BJ (cell line): ENCODE measurements at regions of chr2 and their contacts with region 1.

Region 1: DNA sequence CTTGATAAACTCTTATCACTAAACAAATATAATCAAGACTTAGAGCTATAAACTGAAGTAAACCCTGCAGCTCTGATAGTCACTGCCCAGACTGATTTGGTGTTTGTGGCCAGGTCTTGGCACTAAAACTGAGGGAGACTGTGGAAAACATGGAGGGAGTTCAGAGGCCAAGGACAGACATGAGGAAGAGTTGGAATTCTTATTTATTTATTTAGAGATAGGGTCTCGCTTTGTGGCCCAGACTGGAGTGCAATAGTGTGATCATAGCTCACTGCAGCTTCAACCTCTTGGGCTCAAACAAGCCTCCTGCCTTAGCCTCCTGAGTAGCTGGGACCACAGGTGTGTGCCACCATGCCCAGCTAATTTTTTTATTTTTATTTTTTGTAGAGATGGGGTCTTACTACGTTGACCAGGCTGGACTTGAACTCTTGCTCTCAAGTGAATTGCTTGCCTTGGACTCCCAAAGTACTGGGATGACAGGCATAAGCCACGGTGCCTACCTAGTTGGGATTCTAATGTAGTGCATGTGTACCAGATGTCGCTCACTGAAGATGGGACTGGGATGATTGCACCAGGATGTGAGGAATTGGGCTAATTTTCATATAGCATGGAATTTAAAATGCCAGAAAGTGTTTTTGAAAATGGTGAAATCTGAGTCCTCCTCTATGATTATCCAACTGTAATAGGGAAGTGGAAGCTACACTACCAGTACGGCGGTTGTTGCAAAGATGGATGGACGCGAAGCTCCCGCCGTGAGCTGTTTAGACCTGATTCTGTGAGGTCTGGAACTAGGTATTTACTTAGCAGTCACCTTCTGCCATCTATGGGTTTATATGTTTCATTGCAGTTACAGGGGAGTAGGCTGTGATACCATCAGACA is 52.7 kb upstream of the CTLA4 start:
- DNase-seq: no peak
- H3K4me3 ChIP-seq: no peak overlapping the region
- H3K27me3 ChIP-seq: no peaks in the 10 kb centered on the region
- CTCF ChIP-seq: peak; percentile 67

Region 2: DNA sequence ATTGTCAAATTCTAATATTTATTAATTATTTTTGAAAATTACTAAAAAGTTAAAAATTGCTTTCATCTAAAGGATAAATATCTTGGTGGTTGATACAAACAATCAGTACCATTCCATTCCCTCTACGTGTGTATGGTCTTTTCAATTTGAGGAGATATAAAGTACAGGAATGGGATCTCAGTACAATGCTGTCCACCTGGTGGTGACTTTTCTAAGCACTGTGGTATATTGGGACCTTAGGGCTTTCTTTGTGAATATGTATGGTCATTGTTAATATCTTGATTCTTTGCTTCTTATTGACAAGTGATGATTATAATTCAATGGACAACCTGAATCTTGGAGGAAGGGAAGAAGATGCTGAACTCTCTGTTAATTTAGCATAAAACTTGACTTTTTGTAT is 717.2 kb before region 1 on chr2:
- CTCF ChIA-PET with region 1: no interaction called
- POLR2A ChIA-PET with region 1: interaction called, 29 read pairs
- DNase-seq: no peak
- H3K4me3 ChIP-seq: no peak overlapping the region
- H3K27me3 ChIP-seq: no peaks in the 10 kb centered on the region
- CTCF ChIP-seq: peak; percentile 22; the same call in 1 of the 2 replicates

Region 3: GRCh38 chr2:203225423-203226039 is 589.4 kb before region 1 on chr2:
- CTCF ChIA-PET with region 1: interaction called, 20 read pairs
- POLR2A ChIA-PET with region 1: no interaction called
- DNase-seq: no peak
- H3K4me3 ChIP-seq: no peak overlapping the region
- H3K27me3 ChIP-seq: no peaks in the 10 kb centered on the region
- CTCF ChIP-seq: peak; percentile 65

Region 4: DNA sequence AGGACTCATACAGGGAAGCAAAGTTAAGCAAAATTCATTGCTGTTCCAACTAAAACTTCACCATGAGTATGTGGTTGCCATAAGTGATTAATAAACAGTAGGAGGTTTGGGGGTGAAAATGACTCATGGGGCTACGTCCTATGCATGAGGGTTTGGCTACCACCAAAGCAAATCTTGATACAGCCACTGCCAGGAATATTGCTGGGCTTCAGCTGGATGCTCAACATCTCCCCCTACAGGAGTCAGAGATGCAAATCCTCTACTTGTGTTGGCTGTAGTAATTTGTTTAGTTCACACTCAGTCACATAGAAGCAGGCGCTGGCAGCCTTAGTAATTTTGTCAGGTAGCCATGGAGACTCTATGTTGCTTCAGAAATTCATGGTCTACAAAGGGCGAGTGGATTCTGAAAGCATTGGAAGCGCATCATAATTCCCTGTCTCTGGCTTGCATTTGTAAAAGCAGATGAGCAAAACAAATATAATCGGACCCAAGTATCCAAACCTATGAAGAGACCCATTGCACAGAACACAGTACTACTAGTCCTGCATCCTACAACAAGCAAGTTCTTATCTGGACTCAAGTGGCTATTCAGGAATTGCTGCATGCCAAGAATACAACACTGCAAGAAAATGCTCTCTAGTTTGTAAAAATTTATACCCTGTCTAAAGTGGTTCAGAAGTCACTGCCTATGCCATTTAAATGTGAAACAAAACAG is 32.5 kb before region 1 on chr2:
- CTCF ChIA-PET with region 1: interaction called, 14 read pairs
- POLR2A ChIA-PET with region 1: no interaction called
- DNase-seq: no peak
- H3K4me3 ChIP-seq: no peak overlapping the region
- H3K27me3 ChIP-seq: no peaks in the 10 kb centered on the region
- CTCF ChIP-seq: peak; percentile 82